Common myeloid progenitor, CD34-positive (primary cell): ENCODE measurements at regions of chr4 and their contacts with region 1.

Region 1: DNA sequence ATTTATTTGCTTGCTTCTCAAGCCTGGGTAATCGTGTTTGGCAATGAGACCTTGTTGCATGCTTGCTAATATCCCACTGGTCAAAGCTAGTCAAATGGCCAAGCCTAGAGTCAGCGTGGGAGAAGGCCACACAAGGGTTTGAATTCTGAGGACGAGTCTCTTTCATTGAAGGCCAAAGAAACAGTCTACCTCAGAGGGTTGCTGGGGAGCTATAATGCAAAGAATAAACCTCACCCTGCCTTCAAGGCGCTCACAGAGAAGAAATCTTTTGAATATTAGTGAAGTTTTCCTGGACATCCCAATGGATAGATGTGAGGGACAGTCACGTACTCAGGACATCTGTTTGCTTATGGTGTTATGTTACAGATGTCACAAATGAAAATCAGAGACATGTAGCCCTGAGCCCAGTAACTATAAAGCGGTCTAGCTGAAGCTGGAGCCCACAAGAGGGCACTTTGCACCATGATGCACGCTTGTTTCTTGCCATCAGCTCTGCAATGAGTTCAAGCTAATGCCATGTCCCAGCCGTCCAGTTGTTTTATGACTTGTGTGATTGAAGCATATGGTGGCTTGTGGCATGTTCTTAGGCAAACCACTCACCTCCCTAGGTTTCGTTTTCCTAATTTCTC is 1.1 kb upstream of the TLR3 start:
- DNase-seq: peak; percentile 73 to 78 (median 75)
- H3K4me3 ChIP-seq: peak overlapping the region in 5 of 7 experiments; percentile 77 to 98 (median 85)
- H3K27ac ChIP-seq: no peak overlapping the region
- H3K4me1 ChIP-seq: peaks cover 8 to 14% (median 10%) of the 10 kb centered on the region in 4 experiments
- H3K27me3 ChIP-seq: no peaks in the 10 kb centered on the region

Region 2: DNA sequence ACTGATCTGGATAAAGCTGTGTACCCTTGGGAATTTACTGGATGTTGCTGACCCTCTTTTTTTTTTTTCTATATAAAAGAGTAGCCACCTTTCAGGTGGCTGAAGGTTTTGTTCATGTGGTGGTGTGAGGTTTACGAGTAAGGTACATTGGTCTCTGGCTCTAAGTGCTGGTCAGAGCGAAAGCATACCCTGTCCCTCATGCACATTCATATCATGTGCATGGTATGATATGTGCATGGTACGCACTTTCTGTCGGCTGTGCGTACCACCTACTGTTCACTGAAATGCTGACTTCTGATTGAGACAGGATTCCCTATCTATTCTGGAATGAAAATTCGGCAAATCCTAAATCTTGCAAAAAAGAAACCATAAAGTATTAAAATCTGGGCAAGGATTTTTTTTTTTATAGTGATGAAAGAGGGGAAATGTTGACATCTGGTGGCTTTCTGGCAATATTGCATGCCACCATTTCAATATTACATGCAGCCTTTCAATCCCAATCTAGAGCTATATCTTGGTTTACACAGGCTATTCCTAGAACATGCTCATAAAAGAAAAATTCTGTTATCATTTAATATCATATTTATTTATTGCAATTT is 69.4 kb after region 1 on chr4:
- CTCF ChIA-PET with region 1: interaction called, 52 read pairs
- POLR2A ChIA-PET with region 1: no interaction called
- DNase-seq: peak; percentile 33 to 55 (median 48)
- H3K4me3 ChIP-seq: no peak overlapping the region
- H3K27ac ChIP-seq: no peak overlapping the region
- H3K4me1 ChIP-seq: no peaks in the 10 kb centered on the region
- H3K27me3 ChIP-seq: peaks cover 0 to 17% (median 5%) of the 10 kb centered on the region in 5 experiments

Region 3: DNA sequence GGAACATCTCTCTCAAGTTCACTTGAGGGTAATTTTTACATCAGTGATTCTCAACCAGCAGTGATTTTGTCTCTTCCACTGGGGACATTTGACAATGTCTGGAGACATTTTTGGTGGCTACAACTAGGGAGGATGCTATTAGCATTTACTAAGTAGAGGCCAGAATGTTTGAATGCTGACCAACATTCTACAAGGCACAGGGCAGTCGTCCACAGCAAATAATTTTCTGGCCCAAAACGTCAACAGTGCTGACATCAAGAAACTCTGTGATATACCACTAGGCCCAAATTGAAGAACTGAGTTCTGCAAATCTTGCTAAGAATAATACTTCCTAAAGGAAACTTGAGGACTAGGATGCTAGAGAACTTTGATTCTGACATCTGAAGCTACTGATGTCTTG is 166.5 kb after region 1 on chr4:
- CTCF ChIA-PET with region 1: no interaction called
- POLR2A ChIA-PET with region 1: no interaction called
- DNase-seq: no peak
- H3K4me3 ChIP-seq: no peak overlapping the region
- H3K27ac ChIP-seq: no peak overlapping the region
- H3K4me1 ChIP-seq: no peaks in the 10 kb centered on the region
- H3K27me3 ChIP-seq: no peaks in the 10 kb centered on the region